ENCODE measurements at regions of chr9 and their contacts with region 1.

Region 1: GRCh38 chr9:128322404-128323211 is at the starts of genes COQ4 and TRUB2:
- DNase-seq: peak; percentile 98 to 100 (median 100)
- ATAC-seq: peak; percentile 95
- H3K4me3 ChIP-seq: peak within 1 kb of the TSS; percentile 67
- H3K27ac ChIP-seq: peak within 1 kb of the TSS; percentile 94
- H3K4me1 ChIP-seq: peaks cover 8 to 19% of the 10 kb centered on the region in 2 experiments
- H3K27me3 ChIP-seq: no peaks in the 10 kb centered on the region
- CTCF ChIP-seq: peak in 2 of 3 experiments; percentile 32 to 37; a peak in 4 of 6 replicates
- EP300 ChIP-seq: peak; percentile 66
- POLR2A ChIP-seq: no peak
- RAD21 ChIP-seq: peak; percentile 21 to 45
- polyA plus RNA-seq, gene COQ4: 9.1 to 11.3 TPM
- polyA plus RNA-seq, gene TRUB2: 9.3 to 24.2 TPM

Region 2: GRCh38 chr9:128310461-128310860 is 12.1 kb before region 1 on chr9:
- CTCF ChIA-PET with region 1: no interaction called
- POLR2A ChIA-PET with region 1: interaction called, 35 read pairs
- in situ Hi-C with region 1: no loop called
- intact Hi-C with region 1: loop called (anchors 1 kb)
- DNase-seq: no peak
- ATAC-seq: no peak
- H3K4me3 ChIP-seq: no peak overlapping the region
- H3K27ac ChIP-seq: peak overlapping the region; percentile 13; the same call in 2 of the 3 replicates
- H3K4me1 ChIP-seq: peaks cover 28 to 30% of the 10 kb centered on the region in 2 experiments
- H3K27me3 ChIP-seq: no peaks in the 10 kb centered on the region
- CTCF ChIP-seq: no peak
- EP300 ChIP-seq: no peak
- POLR2A ChIP-seq: no peak
- RAD21 ChIP-seq: no peak

Region 3: DNA sequence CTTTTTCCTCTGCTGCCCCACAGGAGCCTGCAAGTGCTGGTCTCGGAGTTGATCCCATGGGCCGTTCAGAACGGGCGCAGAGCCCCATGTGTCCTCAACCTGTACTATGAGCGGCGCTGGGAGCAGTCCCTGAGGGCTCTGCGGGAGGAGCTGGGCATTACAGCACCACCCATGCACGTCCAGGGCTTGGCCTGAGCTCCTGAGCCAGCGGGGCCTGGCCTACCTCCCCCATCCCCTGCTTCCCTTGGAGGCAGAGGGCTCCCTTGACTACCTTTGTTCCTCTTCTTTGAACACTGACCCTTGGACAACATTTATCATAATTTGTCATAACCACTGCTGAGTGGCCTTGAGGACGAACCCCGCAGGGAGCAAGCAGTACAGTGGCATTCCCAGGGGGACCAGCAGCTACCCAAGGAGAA is 10.9 kb after region 1 on chr9:
- CTCF ChIA-PET with region 1: no interaction called
- POLR2A ChIA-PET with region 1: interaction called, 51 read pairs
- in situ Hi-C with region 1: no loop called
- intact Hi-C with region 1: no loop called
- DNase-seq: peak in 3 of 4 experiments; percentile 21 to 31 (median 29)
- ATAC-seq: no peak; the same call in 2 of the 3 replicates
- H3K4me3 ChIP-seq: no peak overlapping the region
- H3K27ac ChIP-seq: no peak overlapping the region
- H3K4me1 ChIP-seq: peaks cover 5 to 17% of the 10 kb centered on the region in 2 experiments; a peak in 4 of 5 replicates
- H3K27me3 ChIP-seq: no peaks in the 10 kb centered on the region
- CTCF ChIP-seq: no peak
- EP300 ChIP-seq: no peak
- POLR2A ChIP-seq: no peak
- RAD21 ChIP-seq: no peak

Region 4: DNA sequence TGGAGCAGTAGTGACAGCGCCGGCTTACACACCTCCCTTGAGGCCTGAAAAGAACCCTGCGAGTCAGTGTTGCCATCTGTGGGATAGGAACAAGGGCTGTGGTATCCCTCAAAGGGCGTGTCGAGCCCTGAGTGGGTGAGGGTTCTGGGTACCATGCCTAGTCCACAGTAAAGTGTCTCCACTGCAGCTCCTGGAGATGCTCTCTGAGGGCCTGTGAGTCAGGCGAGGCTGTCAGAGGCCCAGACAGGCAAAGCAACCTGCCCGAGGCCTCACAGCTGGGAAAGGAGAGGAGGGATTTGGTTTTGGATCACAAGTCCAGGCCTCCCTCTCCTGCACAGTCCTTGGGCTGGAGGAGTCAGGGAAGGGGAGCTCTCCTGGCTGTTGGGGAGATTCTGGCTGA is 1348.9 kb after region 1 on chr9:
- CTCF ChIA-PET with region 1: no interaction called
- POLR2A ChIA-PET with region 1: no interaction called
- in situ Hi-C with region 1: loop called (anchors 5 kb)
- intact Hi-C with region 1: no loop called
- DNase-seq: peak in 1 of 4 experiments; percentile 10
- ATAC-seq: no peak; the same call in none of the 3 replicates
- H3K4me3 ChIP-seq: no peak overlapping the region
- H3K27ac ChIP-seq: no peak overlapping the region
- H3K4me1 ChIP-seq: peaks cover 0 to 37% of the 10 kb centered on the region in 2 experiments; a peak in 2 of 5 replicates
- H3K27me3 ChIP-seq: peaks cover 31 to 72% of the 10 kb centered on the region in 2 experiments
- CTCF ChIP-seq: no peak
- EP300 ChIP-seq: no peak
- POLR2A ChIP-seq: no peak
- RAD21 ChIP-seq: no peak

Measured in K562 (cell line).